PC-3 (cell line): ENCODE measurements at regions of chr10 and their contacts with region 1.

Region 1: GRCh38 chr10:34187201-34187600 is 627.9 kb downstream of the PARD3 start:
- DNase-seq: no peak
- ATAC-seq: no peak
- H3K4me3 ChIP-seq: no peak overlapping the region
- H3K27ac ChIP-seq: no peak overlapping the region
- H3K4me1 ChIP-seq: peaks cover 19% of the 10 kb centered on the region
- H3K27me3 ChIP-seq: no peaks in the 10 kb centered on the region
- CTCF ChIP-seq: no peak

Region 2: DNA sequence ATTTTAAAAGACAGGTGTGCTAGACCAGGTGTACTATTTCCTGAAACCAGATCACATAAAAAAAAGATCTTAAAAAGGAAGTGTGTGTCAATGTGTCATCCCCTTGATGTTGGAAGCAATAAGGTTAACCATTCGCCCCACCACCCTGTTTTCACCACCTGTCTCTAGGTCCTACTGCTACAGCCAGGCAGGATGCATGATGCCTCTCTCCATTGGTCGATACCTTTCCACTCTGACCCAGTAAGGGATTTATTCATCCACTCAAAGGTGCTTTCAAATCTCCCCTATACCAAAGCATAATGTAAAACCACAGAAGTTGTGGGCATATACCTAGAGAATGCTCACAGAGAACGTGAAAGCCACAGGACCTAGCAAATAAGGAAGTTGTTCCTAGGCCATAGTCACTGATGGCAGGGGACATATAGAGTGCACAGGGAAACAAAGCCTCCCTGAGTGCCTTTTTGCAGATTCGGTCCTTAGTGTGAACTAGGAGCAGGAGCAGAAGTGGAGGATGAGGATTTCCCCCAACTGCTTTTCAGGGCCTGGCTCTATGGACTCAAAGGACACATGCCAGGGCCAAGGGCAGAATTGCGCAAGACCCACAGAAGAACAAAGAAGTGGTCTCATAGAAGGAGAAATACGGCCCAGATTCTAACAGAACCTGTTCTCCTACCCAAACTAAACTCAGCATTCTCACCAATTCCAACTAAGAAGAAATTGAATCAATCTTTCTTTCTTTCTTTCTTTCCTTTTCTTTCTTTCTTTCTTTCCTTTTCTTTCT is 221.2 kb before region 1 on chr10:
- CTCF ChIA-PET with region 1: no interaction called
- POLR2A ChIA-PET with region 1: no interaction called
- intact Hi-C with region 1: loop called (anchors 5 kb)
- DNase-seq: no peak
- ATAC-seq: no peak
- H3K4me3 ChIP-seq: no peak overlapping the region
- H3K27ac ChIP-seq: no peak overlapping the region
- H3K4me1 ChIP-seq: peaks cover 12% of the 10 kb centered on the region
- H3K27me3 ChIP-seq: no peaks in the 10 kb centered on the region
- CTCF ChIP-seq: no peak

Region 3: DNA sequence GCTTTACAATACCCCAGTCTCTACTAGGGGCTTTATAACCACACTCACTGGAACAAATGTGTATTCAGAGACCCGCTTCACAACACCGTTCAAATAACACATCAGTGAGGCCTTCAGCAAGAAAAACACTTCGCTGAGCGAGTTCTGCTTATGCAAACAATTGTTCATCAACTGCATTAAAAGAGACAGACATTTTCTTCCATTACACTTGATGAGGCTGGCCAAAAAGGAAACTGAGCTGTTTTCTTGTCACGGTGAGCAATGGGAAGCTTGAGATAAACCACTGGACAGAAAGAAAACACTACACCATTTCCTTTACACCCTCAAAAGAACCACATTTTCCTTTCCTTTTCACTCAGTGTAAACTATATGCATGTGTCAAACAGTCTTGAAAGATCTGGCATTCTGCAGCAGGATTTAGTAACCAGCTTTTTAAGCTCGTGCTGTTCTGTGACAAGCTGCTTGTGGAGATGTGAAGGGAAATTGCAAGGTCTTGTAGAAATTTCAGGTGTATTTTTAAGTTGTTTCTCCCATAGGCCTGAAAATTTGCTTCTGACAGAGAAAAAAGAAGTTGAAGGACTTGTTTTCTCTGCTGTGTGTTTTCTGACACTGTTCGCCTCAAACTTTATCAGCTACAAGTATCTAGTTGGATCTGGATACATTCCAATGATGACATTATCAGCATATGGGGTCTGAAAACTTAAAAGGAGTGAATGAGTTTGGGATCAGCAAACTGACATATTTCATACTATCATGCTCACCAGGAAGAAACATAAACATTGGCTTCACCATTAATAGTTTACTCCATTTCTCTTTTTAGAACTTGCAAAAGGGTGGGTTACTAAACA is 65.2 kb before region 1 on chr10:
- CTCF ChIA-PET with region 1: no interaction called
- POLR2A ChIA-PET with region 1: interaction called, 7 read pairs
- intact Hi-C with region 1: loop called (anchors 1 kb)
- DNase-seq: peak; percentile 87
- ATAC-seq: peak; percentile 33
- H3K4me3 ChIP-seq: peak overlapping the region; percentile 2; the same call in 1 of the 2 replicates
- H3K27ac ChIP-seq: peak overlapping the region; percentile 49
- H3K4me1 ChIP-seq: peaks cover 33% of the 10 kb centered on the region
- H3K27me3 ChIP-seq: no peaks in the 10 kb centered on the region
- CTCF ChIP-seq: no peak

Region 4: DNA sequence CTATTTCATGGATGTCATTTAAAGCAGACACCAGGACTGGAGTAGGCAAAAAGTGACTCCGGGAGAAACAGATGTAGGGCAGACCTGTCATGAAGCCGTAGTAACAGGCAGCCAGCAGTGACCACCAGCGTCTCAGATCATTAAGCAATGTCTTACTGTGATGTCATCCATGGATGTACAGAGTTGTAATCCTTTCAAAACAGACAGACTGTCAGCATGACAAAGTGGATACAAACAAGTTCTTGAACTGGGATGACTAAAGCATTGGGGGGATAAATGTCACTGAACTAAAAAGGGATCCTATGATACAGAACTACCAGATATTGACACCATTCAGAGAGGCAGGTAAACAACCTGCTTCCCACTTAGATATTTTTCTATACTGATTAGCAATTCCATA is 47.6 kb before region 1 on chr10:
- CTCF ChIA-PET with region 1: no interaction called
- POLR2A ChIA-PET with region 1: no interaction called
- intact Hi-C with region 1: loop called (anchors 1 kb)
- DNase-seq: peak; percentile 42
- ATAC-seq: no peak
- H3K4me3 ChIP-seq: no peak overlapping the region
- H3K27ac ChIP-seq: no peak overlapping the region
- H3K4me1 ChIP-seq: peaks cover 23% of the 10 kb centered on the region
- H3K27me3 ChIP-seq: no peaks in the 10 kb centered on the region
- CTCF ChIP-seq: no peak

Region 5: DNA sequence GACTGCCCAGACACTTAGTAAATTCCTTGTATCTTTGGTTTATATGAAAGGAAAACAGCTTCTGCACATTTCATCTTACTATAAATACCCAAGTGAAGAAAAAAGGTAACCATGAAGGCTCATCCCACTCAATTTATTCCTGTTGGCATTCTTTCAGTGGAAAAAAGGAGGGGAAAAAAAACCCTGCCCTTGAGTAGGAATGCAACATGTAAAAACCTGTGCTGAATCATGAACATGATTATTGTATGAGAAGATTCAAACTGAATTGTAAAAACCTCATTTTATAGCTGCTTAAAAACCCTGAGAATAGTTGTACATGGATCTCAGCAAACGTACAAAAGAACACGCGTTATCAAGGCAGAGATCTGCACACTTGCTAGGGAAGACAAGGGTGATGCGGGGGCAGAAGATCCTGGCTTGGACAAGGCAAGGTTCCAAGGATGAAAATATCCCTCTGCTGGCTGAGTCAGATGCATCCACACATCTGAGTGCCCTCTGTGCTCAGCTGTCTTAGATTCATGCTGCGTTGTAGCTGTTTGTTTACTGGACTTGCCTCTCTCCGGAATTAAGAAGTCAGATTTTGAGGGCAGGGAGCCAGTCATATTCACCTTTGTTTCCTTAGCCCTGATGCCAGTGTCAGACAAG is 30.3 kb before region 1 on chr10:
- CTCF ChIA-PET with region 1: no interaction called
- POLR2A ChIA-PET with region 1: no interaction called
- intact Hi-C with region 1: loop called (anchors 1 kb)
- DNase-seq: peak; percentile 95
- ATAC-seq: peak; percentile 96
- H3K4me3 ChIP-seq: no peak overlapping the region
- H3K27ac ChIP-seq: peak overlapping the region; percentile 46
- H3K4me1 ChIP-seq: peaks cover 22% of the 10 kb centered on the region
- H3K27me3 ChIP-seq: no peaks in the 10 kb centered on the region
- CTCF ChIP-seq: peak; percentile 73